ENCODE measurements at regions of chr11 and their contacts with region 1.

Region 1: DNA sequence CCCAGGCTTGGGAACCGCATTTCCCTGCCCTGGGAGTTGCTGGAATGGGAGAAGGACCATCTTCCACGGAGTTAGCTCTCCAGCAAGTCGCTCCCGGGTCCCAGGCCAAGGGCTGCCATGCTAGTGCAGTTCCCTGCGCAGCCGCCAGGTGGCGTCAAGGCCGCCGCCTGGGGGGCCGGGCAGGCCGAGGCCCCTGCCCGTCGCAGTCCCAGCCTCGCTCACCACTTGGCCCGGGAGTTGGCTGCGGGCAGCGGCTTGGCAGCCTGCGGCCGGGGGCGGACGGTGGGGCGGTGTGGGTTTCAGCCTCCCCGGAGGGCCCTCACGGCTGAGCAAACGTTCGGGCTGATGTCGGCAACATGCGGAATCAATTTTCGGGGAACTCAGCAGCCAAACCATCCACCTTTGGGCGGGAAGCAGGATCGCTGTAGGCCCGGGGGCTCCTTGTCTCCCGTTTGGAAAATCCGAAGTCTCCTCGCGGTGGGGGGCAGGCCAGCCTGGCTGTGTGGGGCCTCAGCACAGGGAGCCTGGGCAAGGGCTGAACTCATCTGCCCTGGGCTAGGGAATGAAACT is 415.1 kb downstream of the SOX6 start:
- DNase-seq: peak; percentile 82
- ATAC-seq: peak; percentile 87
- H3K4me3 Mint-ChIP-seq: no peak overlapping the region
- H3K27ac Mint-ChIP-seq: no peak overlapping the region
- H3K4me1 Mint-ChIP-seq: peaks cover 3% of the 10 kb centered on the region
- H3K27me3 Mint-ChIP-seq: peaks cover 29% of the 10 kb centered on the region
- CTCF ChIP-seq: peak; percentile 99

Region 2: GRCh38 chr11:15883455-15883920 is 57.8 kb before region 1 on chr11:
- CTCF ChIA-PET with region 1: no interaction called
- POLR2A ChIA-PET with region 1: no interaction called
- DNase-seq: no peak
- ATAC-seq: no peak
- H3K4me3 Mint-ChIP-seq: no peak overlapping the region
- H3K27ac Mint-ChIP-seq: no peak overlapping the region
- H3K4me1 Mint-ChIP-seq: no peaks in the 10 kb centered on the region; the same call in 1 of the 2 replicates
- H3K27me3 Mint-ChIP-seq: no peaks in the 10 kb centered on the region
- CTCF ChIP-seq: no peak

Region 3: DNA sequence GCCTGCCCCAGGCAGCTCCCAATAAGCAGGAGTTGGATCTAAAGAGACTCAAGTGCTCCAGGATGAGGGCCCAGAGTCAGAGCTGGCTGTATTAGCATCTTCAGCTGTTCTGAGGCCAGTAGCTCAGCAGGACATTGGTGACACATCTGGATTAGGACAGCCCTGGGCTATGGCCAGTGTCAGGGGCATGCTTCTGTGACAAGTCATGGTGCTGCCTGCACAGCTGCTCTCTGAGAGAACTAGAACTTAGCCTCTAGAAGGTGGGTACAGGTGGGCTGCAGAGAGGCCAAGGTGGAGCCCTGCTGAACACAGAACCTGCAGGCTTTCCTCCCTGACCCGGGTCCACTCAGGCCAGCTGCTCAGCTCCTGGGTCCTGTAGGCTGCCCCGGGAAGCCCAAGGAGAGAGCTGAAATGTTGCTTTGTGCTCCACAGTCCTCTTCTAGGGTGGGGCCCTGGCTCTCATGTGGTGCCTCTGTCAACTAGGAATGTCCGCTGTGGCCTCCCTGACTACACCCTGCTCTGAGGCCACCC is 11.8 kb before region 1 on chr11:
- CTCF ChIA-PET with region 1: interaction called, 20 read pairs
- POLR2A ChIA-PET with region 1: no interaction called
- DNase-seq: no peak
- ATAC-seq: no peak
- H3K4me3 Mint-ChIP-seq: no peak overlapping the region
- H3K27ac Mint-ChIP-seq: no peak overlapping the region
- H3K4me1 Mint-ChIP-seq: no peaks in the 10 kb centered on the region
- H3K27me3 Mint-ChIP-seq: no peaks in the 10 kb centered on the region; the same call in 1 of the 2 replicates
- CTCF ChIP-seq: no peak

Region 4: GRCh38 chr11:16111690-16112089 is 170.4 kb after region 1 on chr11:
- CTCF ChIA-PET with region 1: no interaction called
- POLR2A ChIA-PET with region 1: no interaction called
- DNase-seq: no peak
- ATAC-seq: peak; percentile 52
- H3K4me3 Mint-ChIP-seq: 0 out of 2 replicates have a peak overlapping the region, but pooled peaks have one; percentile 18
- H3K27ac Mint-ChIP-seq: peak overlapping the region; percentile 60; the same call in 1 of the 2 replicates
- H3K4me1 Mint-ChIP-seq: peaks cover 25% of the 10 kb centered on the region
- H3K27me3 Mint-ChIP-seq: no peaks in the 10 kb centered on the region
- CTCF ChIP-seq: no peak